ENCODE measurements at regions of chr4 and their contacts with region 1.

Region 1: GRCh38 chr4:109631532-109632108 is 71.6 kb downstream of the MCUB start:
- DNase-seq: no peak
- ATAC-seq: no peak
- H3K4me3 Mint-ChIP-seq: no peak overlapping the region
- H3K27ac Mint-ChIP-seq: peak overlapping the region; percentile 45
- H3K4me1 Mint-ChIP-seq: peaks cover 20% of the 10 kb centered on the region
- H3K27me3 Mint-ChIP-seq: no peaks in the 10 kb centered on the region

Region 2: DNA sequence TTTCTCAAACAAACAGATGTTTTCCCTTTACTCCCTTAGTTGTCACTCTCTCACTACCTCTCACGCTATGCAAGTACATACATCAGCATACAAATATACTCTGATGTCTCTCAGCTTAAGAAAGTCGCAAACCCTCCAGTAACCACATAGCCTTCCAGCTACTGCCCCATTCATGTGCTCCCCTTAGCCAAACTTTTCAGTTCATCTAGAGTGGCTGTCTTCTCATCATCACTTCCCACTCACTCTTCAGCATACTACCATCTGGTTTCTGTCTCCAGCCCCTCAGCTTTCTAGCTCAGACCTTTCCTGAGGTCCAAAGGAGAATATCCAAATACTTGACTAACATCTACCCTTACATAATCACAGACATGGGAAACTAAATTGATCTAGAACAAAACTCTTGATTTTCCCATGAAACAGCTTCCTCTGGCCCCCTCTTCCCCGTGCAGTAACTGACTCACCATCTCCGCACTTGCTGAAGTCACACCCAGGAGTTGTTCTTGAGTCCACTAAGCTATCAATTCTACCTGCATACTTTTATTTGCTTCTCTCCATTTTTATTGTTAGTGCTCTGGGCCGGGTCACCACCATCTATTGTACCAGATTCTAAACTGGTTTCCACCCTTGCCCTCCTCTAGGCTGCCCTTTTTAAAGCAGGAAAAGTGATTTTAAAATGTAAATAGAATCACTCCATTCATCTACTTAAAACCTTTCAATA is 14.4 kb after region 1 on chr4:
- CTCF ChIA-PET with region 1: interaction called, 10 read pairs
- POLR2A ChIA-PET with region 1: interaction called, 3 read pairs
- DNase-seq: no peak
- ATAC-seq: peak; percentile 6
- H3K4me3 Mint-ChIP-seq: no peak overlapping the region
- H3K27ac Mint-ChIP-seq: no peak overlapping the region
- H3K4me1 Mint-ChIP-seq: peaks cover 31% of the 10 kb centered on the region
- H3K27me3 Mint-ChIP-seq: no peaks in the 10 kb centered on the region

Region 3: GRCh38 chr4:109730619-109731545 is 99.3 kb after region 1 on chr4:
- CTCF ChIA-PET with region 1: no interaction called
- POLR2A ChIA-PET with region 1: no interaction called
- DNase-seq: no peak
- ATAC-seq: no peak
- H3K4me3 Mint-ChIP-seq: peak overlapping the region; percentile 81
- H3K27ac Mint-ChIP-seq: peak overlapping the region; percentile 81
- H3K4me1 Mint-ChIP-seq: peaks cover 19% of the 10 kb centered on the region
- H3K27me3 Mint-ChIP-seq: peaks cover 5% of the 10 kb centered on the region